ENCODE measurements at regions of chr19 and their contacts with region 1.

Region 1: GRCh38 chr19:38506723-38507550 is 73.4 kb downstream of the RYR1 start:
- DNase-seq: peak in 1 of 2 donors; percentile 59
- H3K4me3 ChIP-seq: no peak overlapping the region
- H3K27ac ChIP-seq: no peak overlapping the region
- H3K4me1 ChIP-seq: no peaks in the 10 kb centered on the region
- H3K27me3 ChIP-seq: peaks cover 0 to 42% of the 10 kb centered on the region in 2 donors
- CTCF ChIP-seq: no peak

Region 2: DNA sequence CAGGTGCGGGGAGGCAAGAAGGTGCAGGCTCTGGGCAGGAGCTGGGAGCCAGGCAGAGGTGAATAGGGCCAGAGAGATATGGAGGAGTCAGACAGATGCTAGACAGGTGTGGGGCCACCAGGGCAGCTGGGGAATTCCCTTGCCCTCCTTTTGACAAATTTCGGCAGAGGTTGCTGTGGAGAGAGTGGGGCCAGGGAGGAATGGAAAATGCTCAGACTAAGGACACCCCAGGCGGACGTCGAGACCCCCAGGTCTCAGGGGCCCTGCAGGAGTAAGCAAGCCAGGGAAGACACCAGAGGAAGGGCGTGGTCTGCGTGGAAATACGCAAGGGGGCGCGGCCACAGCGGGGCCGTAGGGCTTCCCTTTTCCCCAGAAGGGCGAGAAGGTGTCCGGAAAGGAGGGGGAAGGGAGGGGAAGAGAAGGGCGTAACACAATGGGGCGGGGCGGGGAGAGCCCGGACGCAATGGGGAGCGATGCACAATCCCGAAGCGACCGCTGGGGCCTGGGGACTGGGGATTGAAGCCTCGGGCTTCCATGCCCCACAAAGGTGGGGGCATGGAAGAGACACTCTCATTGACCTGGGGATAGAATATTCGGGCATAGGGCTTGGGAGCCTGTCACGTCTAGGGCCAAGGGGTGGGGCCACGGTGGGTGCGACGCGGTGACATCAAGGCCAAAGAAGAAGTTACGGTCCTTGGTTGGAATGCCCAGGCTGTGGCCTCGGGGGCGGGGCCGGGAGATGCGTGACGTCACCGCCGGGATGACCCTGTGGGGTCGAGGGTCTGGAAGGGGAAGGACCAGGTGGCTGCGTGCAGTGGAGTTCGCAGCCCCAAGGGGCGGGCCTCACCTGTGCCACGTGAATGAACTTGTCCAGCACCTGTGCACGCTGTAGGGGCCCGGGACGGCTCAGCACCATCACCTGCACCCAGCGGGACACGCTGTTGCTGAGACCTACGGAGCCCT is 89.1 kb before region 1 on chr19:
- intact Hi-C with region 1: loop called (anchors 10 kb)
- DNase-seq: peak in 1 of 2 donors; percentile 59
- H3K4me3 ChIP-seq: peak overlapping the region in 1 of 2 donors; percentile 21
- H3K27ac ChIP-seq: no peak overlapping the region
- H3K4me1 ChIP-seq: peaks cover 0 to 10% (median 5%) of the 10 kb centered on the region in 4 donors
- H3K27me3 ChIP-seq: peaks cover 0 to 63% of the 10 kb centered on the region in 2 donors
- CTCF ChIP-seq: no peak

Region 3: DNA sequence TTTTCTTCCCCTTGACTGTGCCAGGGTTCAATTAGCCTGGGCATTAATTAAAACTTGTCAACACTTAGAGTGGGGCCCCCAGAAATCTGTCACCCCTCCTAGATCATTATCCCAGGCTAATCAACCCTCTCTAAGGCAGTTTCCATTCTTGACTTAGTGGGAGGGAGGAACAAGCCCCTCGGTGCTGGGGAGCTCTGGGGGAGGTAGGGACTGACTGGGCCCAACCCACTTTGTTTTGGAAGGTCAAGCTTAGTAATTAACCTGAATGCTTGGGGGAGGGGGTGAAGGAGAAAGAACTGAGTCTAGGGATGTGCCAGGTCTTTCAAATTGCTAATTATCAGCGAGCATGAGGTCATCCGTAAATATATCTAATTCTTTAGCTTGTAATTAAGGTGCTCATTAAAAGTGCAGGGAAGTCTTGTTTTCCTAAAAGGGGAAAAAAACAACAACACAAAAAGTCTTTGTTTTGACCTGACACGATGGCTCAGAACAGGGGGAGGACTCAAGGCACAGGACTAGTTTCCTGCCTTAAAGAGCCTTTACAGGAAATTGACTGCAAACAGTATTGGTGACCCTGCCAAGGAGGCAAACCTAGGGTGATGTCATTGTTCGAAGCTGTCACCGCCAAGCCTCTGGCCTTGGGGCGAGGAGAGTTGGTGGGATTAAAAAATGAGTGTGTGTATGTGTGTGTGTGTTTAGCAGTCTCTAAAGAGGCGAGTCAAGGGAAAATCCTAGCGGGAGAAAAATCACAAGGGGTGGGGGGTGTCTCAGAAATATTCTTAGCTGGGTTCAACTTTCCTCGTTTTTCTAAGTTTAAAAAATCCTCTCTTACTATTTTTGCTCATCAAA is 159.9 kb after region 1 on chr19:
- intact Hi-C with region 1: no loop called
- DNase-seq: peak; percentile 60 to 83
- H3K4me3 ChIP-seq: no peak overlapping the region
- H3K27ac ChIP-seq: peak overlapping the region; percentile 94 to 97
- H3K4me1 ChIP-seq: peaks cover 31 to 100% (median 96%) of the 10 kb centered on the region in 4 donors
- H3K27me3 ChIP-seq: no peaks in the 10 kb centered on the region
- CTCF ChIP-seq: no peak

Measured in tibial artery (tissue), 4 donors.